ENCODE measurements at regions of chr2 and their contacts with region 1.

Region 1: GRCh38 chr2:16553226-16553625 is 112.4 kb downstream of the CYRIA start:
- DNase-seq: no peak
- H3K4me3 ChIP-seq: no peak overlapping the region
- H3K27ac ChIP-seq: no peak overlapping the region
- H3K4me1 ChIP-seq: no peaks in the 10 kb centered on the region
- H3K27me3 ChIP-seq: no peaks in the 10 kb centered on the region
- CTCF ChIP-seq: peak; percentile 30 to 44 (median 40)

Region 2: GRCh38 chr2:16756831-16757644 is 203.8 kb after region 1 on chr2:
- intact Hi-C with region 1: loop called (anchors 1 kb)
- DNase-seq: peak in 1 of 2 donors; percentile 77
- H3K4me3 ChIP-seq: no peak overlapping the region
- H3K27ac ChIP-seq: no peak overlapping the region
- H3K4me1 ChIP-seq: no peaks in the 10 kb centered on the region
- H3K27me3 ChIP-seq: no peaks in the 10 kb centered on the region
- CTCF ChIP-seq: peak; percentile 76 to 87 (median 83)

Region 3: GRCh38 chr2:17309741-17310339 is 756.6 kb after region 1 on chr2:
- intact Hi-C with region 1: no loop called
- DNase-seq: no peak
- H3K4me3 ChIP-seq: no peak overlapping the region
- H3K27ac ChIP-seq: no peak overlapping the region
- H3K4me1 ChIP-seq: no peaks in the 10 kb centered on the region
- H3K27me3 ChIP-seq: no peaks in the 10 kb centered on the region
- CTCF ChIP-seq: peak in 1 of 3 experiments; percentile 26

Region 4: DNA sequence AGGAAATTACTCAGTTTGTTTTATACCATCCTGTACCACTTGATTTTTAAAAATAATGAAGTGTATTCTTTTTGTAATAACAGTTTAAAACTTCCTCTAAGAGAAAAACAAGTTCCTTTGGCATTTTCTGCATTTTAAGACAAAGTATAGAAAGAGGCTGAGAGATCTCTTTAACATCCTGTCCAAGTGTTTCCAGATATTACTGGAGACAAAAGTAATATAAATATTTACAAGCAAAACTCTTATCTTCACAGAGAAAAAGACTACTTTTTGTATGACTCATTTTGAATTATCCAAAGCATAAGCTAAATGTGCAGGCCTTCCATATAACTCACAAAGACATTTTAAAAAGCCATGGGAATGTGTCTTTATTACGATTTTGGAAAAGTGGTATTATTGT is 1786.1 kb after region 1 on chr2:
- intact Hi-C with region 1: no loop called
- DNase-seq: no peak
- H3K4me3 ChIP-seq: no peak overlapping the region
- H3K27ac ChIP-seq: no peak overlapping the region
- H3K4me1 ChIP-seq: no peaks in the 10 kb centered on the region
- H3K27me3 ChIP-seq: no peaks in the 10 kb centered on the region
- CTCF ChIP-seq: no peak